ENCODE measurements at regions of chr16 and their contacts with region 1.

Region 1: DNA sequence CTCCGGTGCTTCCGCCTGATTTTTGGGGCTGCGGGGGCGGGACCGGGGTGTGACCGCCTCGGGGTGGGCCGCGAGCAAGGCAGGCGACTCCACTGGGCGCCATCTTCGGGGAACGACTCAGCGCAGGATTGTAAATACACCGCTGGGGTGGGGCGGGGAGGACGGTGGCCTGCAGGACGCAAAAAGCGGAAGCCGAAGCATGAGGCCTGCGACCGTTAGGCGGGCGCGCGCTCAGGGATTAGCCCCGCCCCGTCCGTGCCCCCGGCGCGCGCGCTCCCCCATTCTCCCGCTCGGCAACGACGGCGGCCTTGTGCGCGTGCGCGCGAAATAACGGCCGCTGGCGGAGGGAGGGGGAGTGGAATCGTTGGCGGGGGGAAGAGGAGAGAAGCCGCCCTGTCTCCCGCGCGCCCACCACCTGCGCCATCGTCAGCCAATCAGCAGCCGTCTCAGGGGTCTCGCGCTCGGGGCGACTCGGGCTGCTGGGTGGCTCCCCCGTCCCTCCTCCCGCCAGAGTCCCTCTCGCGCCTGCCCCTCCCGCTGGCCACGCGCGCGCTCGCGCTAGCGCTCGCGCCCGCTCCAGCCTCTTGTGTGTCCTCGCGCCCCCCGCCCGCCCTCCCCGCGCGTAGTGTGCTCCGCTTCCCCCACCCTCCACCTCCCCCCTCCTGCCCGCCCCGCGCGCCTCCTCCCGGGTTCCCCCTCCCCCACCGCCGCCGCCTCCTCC is 791 bp upstream of the MAZ start:
- DNase-seq: peak; percentile 95 to 100 (median 97)

Region 2: GRCh38 chr16:29757950-29758466 is 47.5 kb before region 1 on chr16:
- intact Hi-C with region 1: no loop called
- DNase-seq: peak in 1 of 10 donors; percentile 13

Region 3: GRCh38 chr16:29790183-29790952 is 15.2 kb before region 1 on chr16 and contains the start of gene KIF22:
- intact Hi-C with region 1: loop called (anchors 1 kb)
- DNase-seq: peak; percentile 98 to 100 (median 99)

Region 4: GRCh38 chr16:29848420-29849297 is 43.1 kb after region 1 on chr16:
- intact Hi-C with region 1: loop called (anchors 1 kb)
- DNase-seq: peak; percentile 65 to 98 (median 82)

Region 5: GRCh38 chr16:29900102-29900887 is 94.8 kb after region 1 on chr16 and contains the start of gene ASPHD1:
- intact Hi-C with region 1: loop called (anchors 2 kb)
- DNase-seq: peak; percentile 74 to 98 (median 87)